ENCODE measurements at regions of chr6 and their contacts with region 1.

Region 1: GRCh38 chr6:25070547-25071366 is 135.0 kb upstream of the RIPOR2 start:
- DNase-seq: peak; percentile 89
- ATAC-seq: peak; percentile 94
- H3K4me3 Mint-ChIP-seq: peak overlapping the region; percentile 57
- H3K27ac Mint-ChIP-seq: peak overlapping the region; percentile 86
- H3K4me1 Mint-ChIP-seq: peaks cover 5% of the 10 kb centered on the region
- H3K27me3 Mint-ChIP-seq: peaks cover 6% of the 10 kb centered on the region

Region 2: GRCh38 chr6:24855395-24856245 is 215.1 kb before region 1 on chr6:
- CTCF ChIA-PET with region 1: interaction called, 30 read pairs
- DNase-seq: peak; percentile 78
- ATAC-seq: peak; percentile 60
- H3K4me3 Mint-ChIP-seq: no peak overlapping the region
- H3K27ac Mint-ChIP-seq: peak overlapping the region; percentile 88
- H3K4me1 Mint-ChIP-seq: peaks cover 52% of the 10 kb centered on the region
- H3K27me3 Mint-ChIP-seq: no peaks in the 10 kb centered on the region

Region 3: GRCh38 chr6:24949020-24949569 is 121.7 kb before region 1 on chr6:
- CTCF ChIA-PET with region 1: no interaction called
- DNase-seq: peak; percentile 86
- ATAC-seq: peak; percentile 69
- H3K4me3 Mint-ChIP-seq: peak overlapping the region; percentile 46
- H3K27ac Mint-ChIP-seq: peak overlapping the region; percentile 96
- H3K4me1 Mint-ChIP-seq: peaks cover 66% of the 10 kb centered on the region
- H3K27me3 Mint-ChIP-seq: no peaks in the 10 kb centered on the region

Region 4: DNA sequence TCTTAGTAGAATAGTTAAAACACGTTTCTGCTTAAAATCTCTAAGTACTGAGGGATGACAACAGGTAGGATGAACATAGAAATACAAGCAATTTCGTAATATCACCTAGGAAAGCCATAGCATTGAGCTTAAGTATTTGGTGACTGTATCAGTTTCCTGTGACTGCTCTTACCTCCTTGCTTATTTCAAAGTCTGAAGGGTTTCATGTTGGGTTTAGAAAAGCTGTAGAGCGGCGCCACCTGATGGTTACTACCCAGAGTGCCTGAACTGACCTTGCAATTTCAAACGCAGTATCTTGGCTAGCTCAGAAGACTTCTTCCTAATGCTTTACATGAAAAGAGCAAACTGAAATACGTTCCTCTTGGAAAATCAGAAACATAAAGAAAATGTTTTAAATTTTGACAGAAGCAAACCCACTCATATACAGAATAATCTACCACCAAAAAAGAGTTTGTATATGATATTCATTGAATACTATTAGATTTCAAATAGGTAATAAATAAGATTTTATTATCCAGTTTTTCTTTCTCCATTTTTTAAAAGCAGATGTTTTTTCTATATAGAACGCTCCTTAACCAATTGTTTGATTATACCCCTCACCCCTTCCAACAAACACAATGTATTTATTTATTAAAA is 52.7 kb before region 1 on chr6:
- CTCF ChIA-PET with region 1: interaction called, 32 read pairs
- DNase-seq: peak; percentile 87
- ATAC-seq: peak; percentile 89
- H3K4me3 Mint-ChIP-seq: no peak overlapping the region
- H3K27ac Mint-ChIP-seq: peak overlapping the region; percentile 39
- H3K4me1 Mint-ChIP-seq: peaks cover 33% of the 10 kb centered on the region
- H3K27me3 Mint-ChIP-seq: no peaks in the 10 kb centered on the region

Region 5: GRCh38 chr6:25027221-25027916 is 43.4 kb before region 1 on chr6:
- CTCF ChIA-PET with region 1: interaction called, 73 read pairs
- DNase-seq: peak; percentile 90
- ATAC-seq: peak; percentile 97
- H3K4me3 Mint-ChIP-seq: peak overlapping the region; percentile 56
- H3K27ac Mint-ChIP-seq: peak overlapping the region; percentile 73
- H3K4me1 Mint-ChIP-seq: peaks cover 37% of the 10 kb centered on the region
- H3K27me3 Mint-ChIP-seq: no peaks in the 10 kb centered on the region

Region 6: DNA sequence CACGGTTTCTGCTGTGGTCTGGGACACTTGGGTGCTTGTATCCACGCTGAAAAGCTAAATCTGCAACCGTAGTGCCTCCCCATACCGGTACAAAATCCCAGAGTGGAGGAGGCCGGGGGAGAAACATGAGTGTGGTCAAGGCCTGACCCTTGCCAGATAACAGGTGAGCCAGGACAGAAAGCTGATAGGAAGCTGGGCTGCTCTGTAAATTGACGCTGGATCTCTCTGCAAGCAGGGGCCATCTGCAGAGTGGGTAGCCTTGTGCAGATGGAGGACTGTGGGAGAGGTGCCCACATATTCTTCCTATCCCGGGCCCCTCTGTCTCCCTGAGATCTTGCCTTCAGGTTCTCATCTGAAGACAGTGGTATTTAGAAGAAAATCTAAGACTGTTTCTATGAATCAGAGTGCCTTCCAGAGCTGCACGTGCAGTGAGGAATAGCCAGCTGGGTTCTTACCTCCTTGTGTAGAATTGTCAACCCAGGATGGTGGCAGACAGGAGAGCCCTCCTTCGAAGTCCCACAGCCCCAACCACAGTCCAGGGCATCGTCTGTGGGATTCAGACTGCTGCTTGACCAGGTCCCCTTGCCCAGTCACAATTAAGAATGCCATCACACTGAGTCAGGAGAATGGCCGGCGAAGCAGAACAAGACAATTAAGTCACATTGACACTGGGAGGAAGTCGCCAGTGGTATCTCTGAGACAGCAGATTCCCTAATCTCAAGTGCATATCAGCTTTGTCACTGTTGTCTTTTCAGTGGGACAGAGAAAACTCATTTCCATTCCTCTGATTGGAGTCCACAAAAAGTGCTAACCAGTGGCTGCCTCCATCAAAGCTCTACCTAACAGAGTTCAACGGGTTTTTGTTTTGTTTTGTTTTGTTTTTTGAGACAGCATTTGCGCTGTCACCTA is 35.0 kb before region 1 on chr6:
- CTCF ChIA-PET with region 1: interaction called, 29 read pairs
- DNase-seq: peak; percentile 65
- ATAC-seq: peak; percentile 56
- H3K4me3 Mint-ChIP-seq: peak overlapping the region; percentile 83
- H3K27ac Mint-ChIP-seq: peak overlapping the region; percentile 95
- H3K4me1 Mint-ChIP-seq: peaks cover 60% of the 10 kb centered on the region
- H3K27me3 Mint-ChIP-seq: no peaks in the 10 kb centered on the region

Region 7: GRCh38 chr6:25042036-25042521 is 28.7 kb before region 1 on chr6:
- CTCF ChIA-PET with region 1: interaction called, 30 read pairs
- DNase-seq: peak; percentile 64
- ATAC-seq: peak; percentile 63
- H3K4me3 Mint-ChIP-seq: peak overlapping the region; percentile 94
- H3K27ac Mint-ChIP-seq: peak overlapping the region; percentile 92
- H3K4me1 Mint-ChIP-seq: peaks cover 49% of the 10 kb centered on the region
- H3K27me3 Mint-ChIP-seq: no peaks in the 10 kb centered on the region

Region 8: DNA sequence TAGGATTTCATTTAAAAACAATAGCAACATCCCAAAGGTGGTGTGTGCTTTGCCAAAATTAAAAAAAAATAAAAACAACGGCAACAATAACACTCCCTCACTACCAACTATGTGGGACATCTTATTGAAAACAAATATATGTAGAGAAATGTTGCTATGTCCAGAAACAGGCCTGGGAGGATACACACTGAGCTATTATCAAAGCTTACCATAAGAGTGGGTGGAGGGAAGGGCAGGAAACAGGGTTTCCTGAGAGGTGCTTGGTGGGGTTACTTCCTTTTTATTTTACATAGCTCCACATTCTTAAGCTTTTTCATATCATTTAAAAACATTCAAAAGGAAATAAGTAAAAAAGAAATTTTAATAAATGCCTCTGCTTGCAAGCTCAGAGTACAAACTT is 15.0 kb after region 1 on chr6:
- CTCF ChIA-PET with region 1: interaction called, 10 read pairs
- DNase-seq: no peak
- ATAC-seq: peak; percentile 69
- H3K4me3 Mint-ChIP-seq: no peak overlapping the region
- H3K27ac Mint-ChIP-seq: peak overlapping the region; percentile 38
- H3K4me1 Mint-ChIP-seq: peaks cover 14% of the 10 kb centered on the region
- H3K27me3 Mint-ChIP-seq: no peaks in the 10 kb centered on the region